PC-9 (cell line): ENCODE measurements at regions of chr7 and their contacts with region 1.

Region 1: DNA sequence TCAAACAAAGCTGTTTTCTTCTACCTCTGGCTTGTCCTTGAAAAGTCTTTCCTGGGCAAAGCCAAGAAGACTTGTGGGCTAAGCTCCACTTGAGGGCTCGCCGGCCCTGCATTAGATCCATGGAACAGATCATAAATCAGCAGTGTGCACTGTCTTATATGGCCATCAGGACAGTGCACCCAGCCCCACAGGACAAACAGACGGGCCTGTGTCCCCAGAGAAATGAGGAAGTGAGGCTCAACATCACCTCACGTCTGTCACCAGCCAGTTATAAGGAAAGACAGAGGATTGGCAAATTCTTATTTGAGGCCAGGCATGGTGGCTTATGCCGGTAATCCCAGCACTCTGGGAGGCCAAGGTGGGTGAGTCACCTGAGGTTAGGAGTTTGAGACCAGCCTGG is 12.3 kb upstream of the IFT22 start:
- DNase-seq: no peak
- H3K4me3 ChIP-seq: no peak overlapping the region
- H3K27ac ChIP-seq: no peak overlapping the region
- H3K4me1 ChIP-seq: no peaks in the 10 kb centered on the region
- H3K27me3 ChIP-seq: no peaks in the 10 kb centered on the region
- CTCF ChIP-seq: no peak

Region 2: DNA sequence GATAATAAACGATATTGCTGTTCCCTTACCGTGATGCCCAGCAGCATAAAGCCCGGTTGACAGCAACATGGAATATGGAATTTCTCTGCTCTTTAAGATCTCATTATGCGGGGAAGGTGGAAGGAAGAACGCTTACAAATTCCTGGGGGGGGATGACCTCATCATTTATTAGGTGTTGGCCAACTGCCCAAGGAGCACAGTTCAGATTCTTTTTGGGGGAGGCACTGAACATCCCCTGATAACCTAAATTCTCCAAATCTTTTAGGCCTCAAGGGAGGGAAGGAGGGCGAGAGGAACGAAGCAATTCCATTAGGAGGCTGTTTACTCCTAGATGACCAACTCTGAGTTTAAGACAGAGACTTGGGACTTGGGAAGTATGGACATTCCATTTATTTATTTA is 23.5 kb after region 1 on chr7:
- CTCF ChIA-PET with region 1: interaction called, 15 read pairs
- POLR2A ChIA-PET with region 1: no interaction called
- intact Hi-C with region 1: no loop called
- DNase-seq: no peak
- H3K4me3 ChIP-seq: no peak overlapping the region
- H3K27ac ChIP-seq: no peak overlapping the region
- H3K4me1 ChIP-seq: peaks cover 1% of the 10 kb centered on the region; the same call in 1 of the 2 replicates
- H3K27me3 ChIP-seq: no peaks in the 10 kb centered on the region
- CTCF ChIP-seq: no peak